Naive thymus-derived CD4-positive, alpha-beta T cell (primary cell): ENCODE measurements at regions of chr2 and their contacts with region 1.

Region 1: GRCh38 chr2:64144057-64145013 is at the start of gene PELI1:
- DNase-seq: peak; percentile 82 to 95 (median 88)
- ATAC-seq: peak; percentile 97
- H3K4me3 ChIP-seq: peak within 1 kb of the TSS; percentile 88
- H3K4me3 Mint-ChIP-seq: peak within 1 kb of the TSS in 9 of 10 donors; percentile 87 to 98 (median 93)
- H3K27ac ChIP-seq: peak within 1 kb of the TSS; percentile 98
- H3K27ac Mint-ChIP-seq: peak within 1 kb of the TSS; percentile 93 to 99 (median 96)
- H3K4me1 ChIP-seq: peaks cover 11 to 24% of the 10 kb centered on the region in 2 donors
- H3K4me1 Mint-ChIP-seq: peaks cover 19 to 33% (median 31%) of the 10 kb centered on the region in 7 donors
- H3K27me3 ChIP-seq: no peaks in the 10 kb centered on the region
- H3K27me3 Mint-ChIP-seq: no peaks in the 10 kb centered on the region
- total RNA-seq, gene PELI1: 33.4 to 170 (median 57.2) TPM

Region 2: GRCh38 chr2:64052468-64053241 is 91.7 kb before region 1 on chr2:
- CTCF ChIA-PET with region 1: interaction called, 4 read pairs
- POLR2A ChIA-PET with region 1: interaction called, 5 read pairs
- intact Hi-C with region 1: loop called (anchors 1 kb)
- DNase-seq: peak in 7 of 9 donors; percentile 14 to 63 (median 44)
- ATAC-seq: peak; percentile 48
- H3K4me3 ChIP-seq: no peak overlapping the region
- H3K4me3 Mint-ChIP-seq: peak overlapping the region in 9 of 10 donors; percentile 23 to 68 (median 53)
- H3K27ac ChIP-seq: no peak overlapping the region
- H3K27ac Mint-ChIP-seq: peak overlapping the region in 8 of 9 donors; percentile 38 to 92 (median 85)
- H3K4me1 ChIP-seq: peaks cover 3 to 37% of the 10 kb centered on the region in 2 donors
- H3K4me1 Mint-ChIP-seq: peaks cover 35 to 62% (median 54%) of the 10 kb centered on the region in 7 donors
- H3K27me3 ChIP-seq: no peaks in the 10 kb centered on the region
- H3K27me3 Mint-ChIP-seq: peaks cover 0 to 3% (median 0%) of the 10 kb centered on the region in 5 donors

Region 3: GRCh38 chr2:64114063-64114911 is 30.0 kb before region 1 on chr2:
- CTCF ChIA-PET with region 1: interaction called, 3 read pairs
- POLR2A ChIA-PET with region 1: interaction called, 3 read pairs
- intact Hi-C with region 1: loop called (anchors 1 kb)
- DNase-seq: peak in 5 of 9 donors; percentile 7 to 45 (median 34)
- ATAC-seq: peak; percentile 81
- H3K4me3 ChIP-seq: no peak overlapping the region
- H3K4me3 Mint-ChIP-seq: peak overlapping the region; percentile 12 to 75 (median 66)
- H3K27ac ChIP-seq: no peak overlapping the region
- H3K27ac Mint-ChIP-seq: peak overlapping the region; percentile 12 to 75 (median 60)
- H3K4me1 ChIP-seq: peaks cover 10 to 32% of the 10 kb centered on the region in 2 donors
- H3K4me1 Mint-ChIP-seq: peaks cover 55 to 94% (median 85%) of the 10 kb centered on the region in 7 donors
- H3K27me3 ChIP-seq: no peaks in the 10 kb centered on the region
- H3K27me3 Mint-ChIP-seq: no peaks in the 10 kb centered on the region

Region 4: DNA sequence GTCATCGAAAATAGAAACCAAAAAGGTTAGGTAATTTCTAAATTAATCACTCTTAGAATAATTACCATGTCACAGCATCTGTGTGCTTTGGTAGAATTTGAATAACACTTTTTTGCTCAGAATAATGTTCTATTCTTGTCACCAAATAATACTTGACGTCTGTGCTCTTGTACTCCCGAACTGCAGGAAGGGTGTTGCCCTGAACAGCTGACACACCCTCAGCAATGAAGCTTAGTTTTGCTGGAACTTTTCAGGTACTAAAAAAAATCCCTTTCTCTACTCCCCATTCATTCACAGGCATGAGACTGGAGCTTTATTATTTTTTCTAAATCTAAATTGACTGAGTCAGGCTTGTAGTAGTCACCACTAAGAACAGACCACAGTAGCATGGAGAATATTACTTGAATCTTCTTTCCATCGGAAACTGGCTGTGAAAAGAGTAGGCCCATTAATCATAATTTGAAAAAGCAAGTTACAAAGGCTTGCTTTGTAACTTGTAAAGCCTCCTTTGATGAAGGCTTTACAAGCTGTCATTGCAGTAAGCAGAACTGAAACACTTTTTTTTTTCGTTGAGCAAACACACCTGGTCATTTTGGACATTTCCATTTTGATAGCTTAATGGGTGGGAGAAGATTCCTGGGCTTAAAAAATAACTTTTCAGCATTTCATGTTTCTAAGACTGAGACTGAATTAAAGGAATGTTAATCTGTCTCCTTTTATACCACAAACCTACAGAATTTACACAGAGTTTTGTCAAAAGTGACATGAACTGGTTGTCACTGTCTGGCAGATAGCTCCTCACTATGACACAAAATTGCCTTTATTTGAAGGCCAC is 70.2 kb after region 1 on chr2:
- CTCF ChIA-PET with region 1: no interaction called
- POLR2A ChIA-PET with region 1: interaction called, 5 read pairs
- intact Hi-C with region 1: loop called in 1 of 2 experiments (anchors 1 kb)
- DNase-seq: peak in 7 of 9 donors; percentile 60 to 82 (median 73)
- ATAC-seq: peak; percentile 73
- H3K4me3 ChIP-seq: peak overlapping the region; percentile 11
- H3K4me3 Mint-ChIP-seq: peak overlapping the region; percentile 35 to 89 (median 71)
- H3K27ac ChIP-seq: peak overlapping the region; percentile 68
- H3K27ac Mint-ChIP-seq: peak overlapping the region; percentile 78 to 96 (median 93)
- H3K4me1 ChIP-seq: peaks cover 20 to 37% of the 10 kb centered on the region in 2 donors
- H3K4me1 Mint-ChIP-seq: peaks cover 24 to 69% (median 55%) of the 10 kb centered on the region in 7 donors
- H3K27me3 ChIP-seq: no peaks in the 10 kb centered on the region
- H3K27me3 Mint-ChIP-seq: no peaks in the 10 kb centered on the region

Region 5: DNA sequence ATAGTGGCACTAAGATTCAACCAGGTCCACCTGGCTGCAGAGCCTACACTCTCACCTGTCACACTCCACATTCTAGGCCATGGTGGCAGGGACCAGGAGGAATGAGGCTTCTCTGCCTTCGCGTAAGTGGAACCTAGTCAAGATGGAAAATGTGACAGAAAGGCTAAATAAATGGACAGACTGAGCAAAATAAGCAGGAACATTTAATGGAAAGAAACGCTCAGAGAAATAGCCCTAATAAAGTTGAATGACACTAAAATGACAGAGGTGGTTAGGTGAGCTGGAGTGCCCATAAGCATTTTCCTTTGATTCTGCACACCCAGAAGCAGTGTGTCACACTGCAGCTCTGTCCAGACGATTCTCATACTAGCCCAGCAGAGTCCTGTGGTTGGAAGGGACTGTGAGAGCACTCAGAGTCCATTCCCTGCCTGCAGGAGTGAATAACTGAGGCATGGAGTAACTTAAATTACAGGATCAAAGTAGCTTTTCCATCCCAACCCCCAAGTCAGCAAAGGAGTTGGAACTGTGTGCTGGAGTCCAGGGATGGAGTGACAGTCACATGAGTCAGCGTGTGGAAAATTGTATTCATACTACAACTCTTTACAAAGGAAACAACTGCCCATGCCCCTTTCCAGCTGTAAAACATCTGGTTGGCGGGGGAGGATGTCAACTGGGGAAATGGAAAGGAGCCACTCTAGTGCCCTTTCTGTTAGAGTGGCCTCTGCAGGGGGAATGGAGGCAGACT is 204.2 kb after region 1 on chr2:
- CTCF ChIA-PET with region 1: no interaction called
- POLR2A ChIA-PET with region 1: no interaction called
- intact Hi-C with region 1: no loop called
- DNase-seq: no peak
- ATAC-seq: no peak
- H3K4me3 ChIP-seq: no peak overlapping the region
- H3K4me3 Mint-ChIP-seq: no peak overlapping the region
- H3K27ac ChIP-seq: no peak overlapping the region
- H3K27ac Mint-ChIP-seq: no peak overlapping the region
- H3K4me1 ChIP-seq: no peaks in the 10 kb centered on the region
- H3K4me1 Mint-ChIP-seq: no peaks in the 10 kb centered on the region
- H3K27me3 ChIP-seq: no peaks in the 10 kb centered on the region
- H3K27me3 Mint-ChIP-seq: peaks cover 0 to 18% (median 0%) of the 10 kb centered on the region in 5 donors

Region 6: DNA sequence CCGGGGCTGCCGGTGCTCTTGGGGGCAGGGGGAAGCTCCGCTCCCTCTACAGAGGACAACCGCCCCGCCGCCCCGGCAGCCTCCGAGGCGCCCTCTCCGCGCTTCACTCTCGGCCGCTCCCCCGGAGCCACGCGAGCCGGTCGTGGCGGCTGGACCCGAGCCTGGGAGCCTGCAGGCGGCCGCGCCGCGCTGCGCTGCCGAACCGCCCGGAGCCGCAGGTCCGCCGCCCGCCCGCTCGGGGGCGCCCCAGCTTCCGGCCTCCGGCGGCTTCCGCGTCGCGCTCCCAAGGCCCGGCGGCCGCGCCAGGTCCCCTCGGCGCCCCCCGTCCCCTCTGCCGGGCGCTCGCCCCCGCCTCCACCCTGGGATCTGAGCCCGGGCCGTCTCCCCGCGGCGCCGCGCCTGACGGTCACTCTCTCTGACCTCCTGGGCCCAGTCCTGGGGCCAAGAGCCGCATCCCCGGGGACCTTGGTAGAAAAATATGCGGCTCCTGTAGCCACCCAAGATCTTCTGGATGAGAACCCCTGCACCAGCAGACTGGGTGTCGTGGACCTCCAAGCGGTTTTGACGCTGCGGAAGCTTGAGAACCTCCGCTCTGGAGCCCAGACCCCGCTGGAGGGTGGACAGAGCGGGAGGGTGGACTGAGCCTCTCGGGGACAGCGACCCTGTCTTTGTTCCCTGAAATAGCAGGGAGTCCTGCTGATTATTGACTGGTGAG is 465.0 kb after region 1 on chr2:
- CTCF ChIA-PET with region 1: no interaction called
- POLR2A ChIA-PET with region 1: no interaction called
- intact Hi-C with region 1: loop called in 1 of 2 experiments (anchors 5 kb)
- DNase-seq: peak; percentile 49 to 85 (median 78)
- ATAC-seq: peak; percentile 81
- H3K4me3 ChIP-seq: peak overlapping the region; percentile 66
- H3K4me3 Mint-ChIP-seq: peak overlapping the region; percentile 61 to 86 (median 72)
- H3K27ac ChIP-seq: peak overlapping the region; percentile 64
- H3K27ac Mint-ChIP-seq: peak overlapping the region in 8 of 9 donors; percentile 51 to 82 (median 66)
- H3K4me1 ChIP-seq: peaks cover 17 to 27% of the 10 kb centered on the region in 2 donors
- H3K4me1 Mint-ChIP-seq: peaks cover 0 to 33% (median 21%) of the 10 kb centered on the region in 7 donors
- H3K27me3 ChIP-seq: no peaks in the 10 kb centered on the region
- H3K27me3 Mint-ChIP-seq: peaks cover 0 to 24% (median 0%) of the 10 kb centered on the region in 5 donors

Region 7: GRCh38 chr2:65227425-65228262 is 1083.3 kb after region 1 on chr2 and contains the start of gene ACTR2:
- CTCF ChIA-PET with region 1: no interaction called
- POLR2A ChIA-PET with region 1: no interaction called
- intact Hi-C with region 1: loop called (anchors 1 to 2 kb)
- DNase-seq: peak; percentile 86 to 94 (median 93)
- ATAC-seq: peak; percentile 97
- H3K4me3 ChIP-seq: peak within 1 kb of the TSS; percentile 99
- H3K4me3 Mint-ChIP-seq: peak within 1 kb of the TSS; percentile 95 to 100 (median 98)
- H3K27ac ChIP-seq: peak within 1 kb of the TSS; percentile 97
- H3K27ac Mint-ChIP-seq: peak within 1 kb of the TSS; percentile 97 to 99 (median 98)
- H3K4me1 ChIP-seq: peaks cover 25 to 38% of the 10 kb centered on the region in 2 donors
- H3K4me1 Mint-ChIP-seq: peaks cover 24 to 54% (median 44%) of the 10 kb centered on the region in 7 donors
- H3K27me3 ChIP-seq: no peaks in the 10 kb centered on the region
- H3K27me3 Mint-ChIP-seq: no peaks in the 10 kb centered on the region
- total RNA-seq, gene ACTR2: 180 to 435 (median 287) TPM